ENCODE measurements at regions of chr5 and their contacts with region 1.

Region 1: DNA sequence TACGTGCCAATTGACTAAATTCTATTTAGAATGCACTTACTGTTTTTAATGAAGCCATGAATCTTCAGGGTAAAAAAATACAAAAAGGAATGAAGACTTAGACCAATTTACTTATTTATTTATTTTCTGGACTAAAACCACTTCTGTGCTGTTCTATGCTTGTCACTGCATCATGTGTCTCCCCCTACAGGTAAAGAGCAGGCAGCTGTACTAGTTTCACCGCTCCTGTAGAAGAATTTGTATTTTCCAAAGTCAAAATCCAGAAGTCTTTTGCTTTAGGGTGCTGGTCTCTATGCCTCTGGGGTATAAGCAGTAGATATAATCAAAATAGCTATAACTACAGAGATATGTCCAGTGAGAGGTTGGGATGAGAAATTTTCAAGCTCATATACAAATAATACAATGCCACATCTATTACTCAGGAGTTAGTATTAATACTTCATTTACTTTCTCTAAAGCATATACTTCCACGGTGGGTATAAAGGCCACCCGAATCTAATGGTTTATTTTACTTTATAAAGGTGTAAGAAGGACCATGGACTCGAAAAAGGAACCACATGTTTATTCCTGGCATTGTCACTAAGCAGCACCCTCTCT is 591.5 kb downstream of the RAB3C start:
- DNase-seq: peak in 6 of 9 experiments; percentile 8 to 81 (median 30)
- ATAC-seq: peak; percentile 80
- H3K4me3 ChIP-seq: no peak overlapping the region
- H3K4me3 Mint-ChIP-seq: no peak overlapping the region
- H3K27ac ChIP-seq: no peak overlapping the region
- H3K27ac Mint-ChIP-seq: no peak overlapping the region
- H3K4me1 ChIP-seq: no peaks in the 10 kb centered on the region
- H3K4me1 Mint-ChIP-seq: no peaks in the 10 kb centered on the region
- H3K27me3 ChIP-seq: no peaks in the 10 kb centered on the region
- H3K27me3 Mint-ChIP-seq: no peaks in the 10 kb centered on the region
- CTCF ChIP-seq: peak; percentile 87

Region 2: GRCh38 chr5:58346014-58346413 is 828.3 kb before region 1 on chr5:
- CTCF ChIA-PET with region 1: no interaction called
- POLR2A ChIA-PET with region 1: no interaction called
- intact Hi-C with region 1: no loop called
- DNase-seq: no peak
- ATAC-seq: no peak
- H3K4me3 ChIP-seq: no peak overlapping the region
- H3K4me3 Mint-ChIP-seq: no peak overlapping the region
- H3K27ac ChIP-seq: no peak overlapping the region
- H3K27ac Mint-ChIP-seq: no peak overlapping the region
- H3K4me1 ChIP-seq: no peaks in the 10 kb centered on the region
- H3K4me1 Mint-ChIP-seq: no peaks in the 10 kb centered on the region
- H3K27me3 ChIP-seq: no peaks in the 10 kb centered on the region
- H3K27me3 Mint-ChIP-seq: peaks cover 2% of the 10 kb centered on the region
- CTCF ChIP-seq: no peak

Region 3: DNA sequence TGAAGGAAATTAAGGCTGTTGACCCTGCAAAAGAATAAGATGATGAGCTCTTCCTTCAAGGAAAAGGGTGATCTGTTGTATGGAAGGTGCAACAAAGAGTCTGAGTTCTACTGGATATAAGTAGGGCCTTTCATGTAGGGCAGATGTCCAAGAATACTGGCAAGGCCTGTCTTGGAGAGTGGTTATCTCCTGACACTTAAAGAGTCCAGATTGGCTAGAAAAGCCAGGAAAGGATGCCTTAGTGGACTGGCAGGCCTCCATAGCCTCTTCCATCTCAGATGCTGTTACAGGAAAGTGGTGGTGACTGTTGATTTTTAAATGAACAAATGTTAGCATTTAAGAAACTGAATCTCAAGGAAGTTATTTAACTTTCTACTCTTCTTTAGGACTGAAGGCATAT is 195.3 kb before region 1 on chr5:
- CTCF ChIA-PET with region 1: interaction called, 5 read pairs
- POLR2A ChIA-PET with region 1: no interaction called
- intact Hi-C with region 1: loop called (anchors 5 kb)
- DNase-seq: no peak
- ATAC-seq: no peak
- H3K4me3 ChIP-seq: no peak overlapping the region
- H3K4me3 Mint-ChIP-seq: no peak overlapping the region
- H3K27ac ChIP-seq: no peak overlapping the region
- H3K27ac Mint-ChIP-seq: no peak overlapping the region
- H3K4me1 ChIP-seq: no peaks in the 10 kb centered on the region
- H3K4me1 Mint-ChIP-seq: no peaks in the 10 kb centered on the region
- H3K27me3 ChIP-seq: no peaks in the 10 kb centered on the region
- H3K27me3 Mint-ChIP-seq: no peaks in the 10 kb centered on the region
- CTCF ChIP-seq: no peak

Region 4: GRCh38 chr5:59062986-59063683 is 111.2 kb before region 1 on chr5:
- CTCF ChIA-PET with region 1: no interaction called
- POLR2A ChIA-PET with region 1: no interaction called
- intact Hi-C with region 1: no loop called
- DNase-seq: no peak
- ATAC-seq: no peak
- H3K4me3 ChIP-seq: no peak overlapping the region
- H3K4me3 Mint-ChIP-seq: no peak overlapping the region
- H3K27ac ChIP-seq: no peak overlapping the region
- H3K27ac Mint-ChIP-seq: no peak overlapping the region
- H3K4me1 ChIP-seq: no peaks in the 10 kb centered on the region
- H3K4me1 Mint-ChIP-seq: no peaks in the 10 kb centered on the region
- H3K27me3 ChIP-seq: no peaks in the 10 kb centered on the region
- H3K27me3 Mint-ChIP-seq: no peaks in the 10 kb centered on the region
- CTCF ChIP-seq: no peak

Region 5: GRCh38 chr5:59086024-59086423 is 88.3 kb before region 1 on chr5:
- CTCF ChIA-PET with region 1: interaction called, 3 read pairs
- POLR2A ChIA-PET with region 1: no interaction called
- intact Hi-C with region 1: loop called in 1 of 2 experiments (anchors 5 kb)
- DNase-seq: peak in 2 of 9 experiments; percentile 22 to 43
- ATAC-seq: peak; percentile 49
- H3K4me3 ChIP-seq: no peak overlapping the region
- H3K4me3 Mint-ChIP-seq: no peak overlapping the region
- H3K27ac ChIP-seq: no peak overlapping the region
- H3K27ac Mint-ChIP-seq: no peak overlapping the region
- H3K4me1 ChIP-seq: no peaks in the 10 kb centered on the region
- H3K4me1 Mint-ChIP-seq: no peaks in the 10 kb centered on the region
- H3K27me3 ChIP-seq: no peaks in the 10 kb centered on the region
- H3K27me3 Mint-ChIP-seq: peaks cover 2% of the 10 kb centered on the region
- CTCF ChIP-seq: no peak

Region 6: GRCh38 chr5:59133682-59134261 is 40.6 kb before region 1 on chr5:
- CTCF ChIA-PET with region 1: interaction called, 35 read pairs
- POLR2A ChIA-PET with region 1: no interaction called
- intact Hi-C with region 1: loop called in 1 of 2 experiments (anchors 5 kb)
- DNase-seq: no peak
- ATAC-seq: no peak
- H3K4me3 ChIP-seq: no peak overlapping the region
- H3K4me3 Mint-ChIP-seq: no peak overlapping the region
- H3K27ac ChIP-seq: no peak overlapping the region
- H3K27ac Mint-ChIP-seq: peak overlapping the region; percentile 35
- H3K4me1 ChIP-seq: peaks cover 10% of the 10 kb centered on the region
- H3K4me1 Mint-ChIP-seq: peaks cover 34% of the 10 kb centered on the region
- H3K27me3 ChIP-seq: no peaks in the 10 kb centered on the region
- H3K27me3 Mint-ChIP-seq: no peaks in the 10 kb centered on the region
- CTCF ChIP-seq: no peak